ENCODE measurements at regions of chr3 and their contacts with region 1.

Region 1: GRCh38 chr3:190701096-190701532 is 161.4 kb downstream of the GMNC start:
- DNase-seq: peak; percentile 91
- ATAC-seq: peak; percentile 99
- H3K4me3 ChIP-seq: no peak overlapping the region; a peak in 1 of 6 replicates
- H3K27ac ChIP-seq: no peak overlapping the region
- H3K4me1 ChIP-seq: peaks cover 23% of the 10 kb centered on the region
- H3K27me3 ChIP-seq: no peaks in the 10 kb centered on the region
- CTCF ChIP-seq: peak; percentile 91
- EP300 ChIP-seq: peak in 1 of 2 experiments; percentile 42; a peak in 1 of 4 replicates
- POLR2A ChIP-seq: no peak
- RAD21 ChIP-seq: peak; percentile 71

Region 2: DNA sequence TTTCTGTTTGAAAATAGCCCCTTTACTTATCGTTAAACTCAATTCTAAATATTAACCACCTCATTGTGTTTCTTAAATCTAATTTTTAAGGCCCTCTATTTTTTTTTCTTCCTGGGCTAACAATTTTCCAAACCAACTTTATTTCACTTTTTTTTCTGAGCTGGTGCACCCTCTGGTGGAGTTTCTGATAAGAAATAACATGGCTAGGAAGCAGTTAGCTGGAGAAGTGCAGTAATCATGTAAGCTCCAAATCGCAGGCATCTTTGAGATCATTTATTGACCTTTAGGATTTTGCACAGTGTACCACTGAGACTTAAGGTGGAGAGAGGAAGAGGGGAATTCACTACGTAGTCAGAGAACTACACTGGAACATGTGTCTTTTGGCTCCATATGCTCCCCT is 257.9 kb before region 1 on chr3:
- CTCF ChIA-PET with region 1: no interaction called
- POLR2A ChIA-PET with region 1: no interaction called
- in situ Hi-C with region 1: no loop called
- intact Hi-C with region 1: loop called (anchors 5 kb)
- DNase-seq: peak; percentile 13
- ATAC-seq: no peak
- H3K4me3 ChIP-seq: no peak overlapping the region
- H3K27ac ChIP-seq: no peak overlapping the region
- H3K4me1 ChIP-seq: peaks cover 19% of the 10 kb centered on the region
- H3K27me3 ChIP-seq: no peaks in the 10 kb centered on the region
- CTCF ChIP-seq: peak; percentile 34; the same call in 1 of the 2 replicates
- EP300 ChIP-seq: no peak
- POLR2A ChIP-seq: no peak
- RAD21 ChIP-seq: no peak

Region 3: DNA sequence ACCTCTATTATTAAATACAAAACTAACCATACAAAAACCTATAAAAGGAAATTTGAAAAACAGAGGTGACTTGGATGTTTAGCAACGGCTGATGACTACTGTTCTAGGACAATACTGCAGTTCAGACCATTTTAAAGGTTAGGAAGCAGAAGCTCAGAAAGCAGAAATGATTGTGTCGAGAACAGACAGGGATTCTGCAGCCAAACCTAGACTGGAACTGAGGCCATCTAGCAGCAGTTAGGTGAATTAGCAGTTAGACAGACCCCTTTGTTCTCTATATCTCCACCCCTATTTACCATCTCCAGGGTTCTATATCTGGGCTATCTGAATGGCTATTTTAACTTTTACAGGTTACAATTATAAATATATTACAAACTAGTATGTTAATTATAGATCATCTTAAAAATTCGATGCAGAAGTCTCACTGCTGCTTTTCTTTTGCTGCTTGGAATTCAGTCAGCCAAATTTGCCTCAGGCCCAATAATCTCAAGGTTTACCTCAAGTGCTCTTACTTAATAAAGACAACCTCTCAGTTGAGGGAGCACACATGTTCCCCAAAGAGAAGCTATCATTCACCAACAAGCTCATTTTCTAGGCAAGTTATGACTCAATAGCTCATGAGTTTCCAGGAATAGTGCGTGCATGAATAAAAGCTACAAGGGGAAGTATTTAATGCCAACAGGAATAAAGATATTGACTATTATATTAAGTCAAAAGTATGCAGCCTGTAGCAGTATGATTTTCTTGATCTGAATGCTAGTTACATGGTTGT is 196.6 kb before region 1 on chr3:
- CTCF ChIA-PET with region 1: no interaction called
- POLR2A ChIA-PET with region 1: no interaction called
- in situ Hi-C with region 1: no loop called
- intact Hi-C with region 1: loop called (anchors 2 kb)
- DNase-seq: peak; percentile 27
- ATAC-seq: peak; percentile 85
- H3K4me3 ChIP-seq: no peak overlapping the region
- H3K27ac ChIP-seq: no peak overlapping the region
- H3K4me1 ChIP-seq: peaks cover 39% of the 10 kb centered on the region
- H3K27me3 ChIP-seq: no peaks in the 10 kb centered on the region
- CTCF ChIP-seq: peak; percentile 43
- EP300 ChIP-seq: no peak
- POLR2A ChIP-seq: no peak
- RAD21 ChIP-seq: no peak

Region 4: DNA sequence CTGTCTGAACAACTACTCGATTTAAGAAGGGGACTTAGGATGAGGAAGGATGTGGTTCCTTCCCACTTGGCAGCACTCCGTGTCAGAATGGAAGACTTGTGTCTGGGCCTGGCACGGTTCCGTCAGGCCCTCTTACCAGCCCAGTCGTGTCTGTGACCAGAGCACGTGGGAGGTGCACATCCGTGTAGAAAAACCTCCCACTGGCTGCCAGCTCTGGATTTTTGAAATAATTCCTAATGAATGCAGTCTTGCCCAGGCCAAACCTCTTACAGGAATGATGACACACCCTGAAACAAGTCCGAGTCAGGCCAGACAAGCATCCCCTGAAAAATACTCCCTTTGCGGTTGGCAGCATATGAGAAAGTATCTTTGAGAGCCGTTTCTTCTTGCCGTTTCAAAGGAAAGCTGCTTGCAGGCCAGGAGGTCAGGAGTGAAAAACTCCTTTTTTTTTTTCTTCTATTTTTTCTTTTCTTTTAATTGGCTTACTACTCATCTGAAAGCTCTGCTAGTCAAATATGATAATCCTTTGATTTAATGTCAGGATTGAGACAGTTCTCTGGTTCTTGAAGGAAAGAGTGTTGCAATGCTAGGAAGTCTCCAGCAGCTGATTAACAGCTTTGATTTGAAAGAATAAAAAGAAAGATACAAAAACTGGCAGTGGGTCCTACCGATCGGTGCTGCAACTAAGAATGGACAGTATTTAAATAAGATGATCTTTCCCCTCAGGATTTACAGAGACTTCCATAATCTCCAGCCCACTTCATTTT is 167.4 kb before region 1 on chr3:
- CTCF ChIA-PET with region 1: no interaction called
- POLR2A ChIA-PET with region 1: no interaction called
- in situ Hi-C with region 1: no loop called
- intact Hi-C with region 1: no loop called
- DNase-seq: no peak
- ATAC-seq: no peak
- H3K4me3 ChIP-seq: no peak overlapping the region
- H3K27ac ChIP-seq: peak overlapping the region; percentile 66
- H3K4me1 ChIP-seq: peaks cover 69% of the 10 kb centered on the region
- H3K27me3 ChIP-seq: no peaks in the 10 kb centered on the region
- CTCF ChIP-seq: no peak
- EP300 ChIP-seq: no peak
- POLR2A ChIP-seq: no peak
- RAD21 ChIP-seq: no peak

Region 5: GRCh38 chr3:190862209-190863118 is 161.3 kb after region 1 on chr3 and contains the start of gene GMNC:
- CTCF ChIA-PET with region 1: no interaction called
- POLR2A ChIA-PET with region 1: no interaction called
- in situ Hi-C with region 1: no loop called
- intact Hi-C with region 1: loop called (anchors 10 kb)
- DNase-seq: peak; percentile 38
- ATAC-seq: peak; percentile 96
- H3K4me3 ChIP-seq: peak within 1 kb of the TSS; percentile 43 to 64 (median 57); a peak in 5 of 6 replicates
- H3K27ac ChIP-seq: no peak within 1 kb of the TSS
- H3K4me1 ChIP-seq: peaks cover 25% of the 10 kb centered on the region
- H3K27me3 ChIP-seq: peaks cover 0 to 4% of the 10 kb centered on the region in 2 experiments; a peak in 2 of 5 replicates
- CTCF ChIP-seq: no peak
- EP300 ChIP-seq: no peak
- POLR2A ChIP-seq: no peak
- RAD21 ChIP-seq: no peak
- total RNA-seq, gene GMNC: not detected in 2 replicates